Posterior cingulate gyrus (tissue), 11 donors: ENCODE measurements at regions of chr15 and their contacts with region 1.

Region 1: GRCh38 chr15:79853458-79854328 is 43.1 kb downstream of the MTHFS start:
- DNase-seq: peak; percentile 47 to 95 (median 73)

Region 2: GRCh38 chr15:79339564-79340314 is 514.0 kb before region 1 on chr15:
- intact Hi-C with region 1: loop called (anchors 2 kb)
- DNase-seq: peak in 3 of 10 donors; percentile 14 to 16 (median 15)

Region 3: GRCh38 chr15:79380755-79381497 is 472.8 kb before region 1 on chr15:
- intact Hi-C with region 1: loop called (anchors 2 kb)
- DNase-seq: peak; percentile 62 to 97 (median 87)

Region 4: DNA sequence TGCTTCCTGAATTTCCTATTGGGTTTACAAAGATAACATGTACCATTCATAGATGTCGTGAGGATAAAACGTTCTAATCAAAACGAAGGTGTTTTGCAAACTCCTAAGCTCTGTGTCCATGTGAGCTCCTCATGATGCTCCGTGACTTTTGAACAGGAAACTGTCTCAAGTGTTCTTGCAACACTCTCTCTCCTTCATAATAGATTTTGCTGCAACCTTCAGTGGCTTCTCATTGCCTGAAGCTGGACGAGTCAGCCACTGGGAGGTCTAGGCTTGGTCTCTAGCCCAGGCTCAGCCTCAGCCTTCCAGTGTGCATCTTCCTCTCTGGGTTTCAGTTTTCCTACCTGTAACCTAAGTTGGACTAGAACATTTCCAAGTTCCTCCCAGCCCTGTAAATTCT is 136.0 kb after region 1 on chr15:
- intact Hi-C with region 1: loop called (anchors 5 kb)
- DNase-seq: no peak

Region 5: DNA sequence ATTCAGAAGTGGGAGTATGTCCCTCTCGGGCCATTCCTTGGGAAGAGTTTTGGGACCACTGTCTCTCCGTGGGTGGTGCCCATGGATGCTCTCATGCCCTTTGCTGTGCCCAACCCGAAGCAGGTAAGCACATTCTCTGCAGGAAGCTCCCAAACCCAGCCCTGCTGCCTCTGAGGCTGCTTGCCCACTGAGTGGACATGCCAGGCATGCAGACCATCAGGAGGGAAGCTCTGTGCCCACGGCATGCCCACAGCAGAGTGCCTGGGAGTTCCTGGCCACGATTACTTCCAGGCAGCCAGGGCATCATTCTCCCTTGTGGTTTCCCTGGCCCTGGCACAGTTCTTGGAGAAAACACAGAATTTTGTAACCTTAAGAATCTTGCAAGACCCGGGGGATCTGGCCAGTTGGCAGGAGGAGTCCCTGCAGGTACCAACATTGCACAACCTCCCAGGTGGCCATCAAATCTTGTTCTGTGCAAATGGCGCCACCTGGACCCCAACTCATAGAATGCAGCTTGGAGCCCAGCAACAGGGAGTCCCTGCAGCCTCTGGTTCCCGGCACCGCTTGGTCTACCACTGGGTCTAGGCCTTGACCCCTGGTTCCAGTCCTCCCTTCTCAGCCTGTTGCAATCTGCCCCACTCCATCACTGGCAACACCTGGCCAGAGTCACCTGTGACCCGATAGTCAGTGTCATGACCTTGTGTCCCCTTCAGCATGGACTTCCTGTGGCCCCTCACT is 319.5 kb after region 1 on chr15:
- intact Hi-C with region 1: loop called (anchors 10 kb)
- DNase-seq: peak; percentile 18 to 92 (median 59)